Endothelial cell of umbilical vein (primary cell): ENCODE measurements at regions of chr4 and their contacts with region 1.

Region 1: DNA sequence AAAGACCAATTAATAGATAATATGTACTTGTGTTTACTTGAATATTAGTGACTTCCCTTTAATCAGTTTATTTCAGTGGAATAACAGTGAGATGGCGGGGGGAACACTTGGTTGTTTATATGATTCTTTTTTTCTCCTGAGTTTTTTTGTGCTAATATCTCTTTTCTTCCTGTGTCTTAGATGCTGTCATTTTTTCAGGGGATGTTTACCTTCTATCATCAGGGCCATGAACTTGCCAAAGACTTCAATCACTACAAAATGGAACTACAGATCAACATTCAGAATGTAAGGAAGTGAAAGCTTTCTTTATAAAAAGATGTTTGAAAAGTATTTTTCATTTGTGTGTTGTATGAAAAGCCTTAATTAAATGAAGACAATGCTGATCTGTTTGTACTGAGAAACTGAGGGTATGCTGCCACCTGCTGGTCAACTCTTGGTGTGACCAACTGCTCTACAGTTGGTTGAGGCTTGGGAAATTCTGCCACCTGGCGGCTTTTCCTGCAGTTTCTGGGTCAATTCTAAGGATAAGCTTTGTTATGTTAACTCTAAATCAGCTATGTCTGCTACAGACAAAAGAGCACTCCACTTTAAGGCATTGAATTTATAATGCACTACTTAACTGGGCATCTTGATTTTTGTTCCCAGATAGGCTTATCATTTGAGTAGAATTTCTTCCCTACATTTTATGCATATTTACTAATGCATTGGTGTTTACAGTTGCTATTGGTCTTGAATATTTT is 134.8 kb downstream of the ARHGAP10 start:
- DNase-seq: peak; percentile 92
- H3K4me3 ChIP-seq: no peak overlapping the region
- H3K27ac ChIP-seq: no peak overlapping the region
- H3K4me1 ChIP-seq: peaks cover 9% of the 10 kb centered on the region
- H3K27me3 ChIP-seq: no peaks in the 10 kb centered on the region
- CTCF ChIP-seq: peak; percentile 92 to 99
- POLR2A ChIP-seq: no peak

Region 2: DNA sequence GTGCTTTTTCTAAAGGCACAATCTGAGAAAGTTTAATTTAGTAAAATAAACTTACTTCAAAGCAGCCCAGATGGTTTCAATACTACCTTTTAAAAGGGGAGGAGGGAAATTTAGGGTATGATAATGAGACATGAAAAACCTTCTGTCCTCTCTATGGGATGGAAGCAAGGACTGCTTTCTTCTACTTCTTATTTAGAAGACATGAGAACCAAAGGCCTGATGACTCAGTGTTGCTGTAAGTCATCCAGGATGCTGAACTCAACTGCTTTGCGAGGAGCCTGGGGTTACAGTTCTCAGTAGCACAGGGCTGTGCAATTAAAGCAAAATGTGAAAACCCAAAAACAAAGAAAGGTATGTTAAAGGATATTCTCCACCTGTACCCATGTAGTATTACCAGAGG is 526.6 kb before region 1 on chr4:
- CTCF ChIA-PET with region 1: no interaction called
- POLR2A ChIA-PET with region 1: no interaction called
- dilution Hi-C with region 1: no loop called
- intact Hi-C with region 1: no loop called
- DNase-seq: peak; percentile 61
- H3K4me3 ChIP-seq: no peak overlapping the region
- H3K27ac ChIP-seq: peak overlapping the region; percentile 37
- H3K4me1 ChIP-seq: peaks cover 26% of the 10 kb centered on the region
- H3K27me3 ChIP-seq: no peaks in the 10 kb centered on the region
- CTCF ChIP-seq: no peak
- POLR2A ChIP-seq: no peak

Region 3: GRCh38 chr4:147590249-147590920 is 276.3 kb before region 1 on chr4:
- CTCF ChIA-PET with region 1: interaction called, 146 read pairs
- POLR2A ChIA-PET with region 1: no interaction called
- dilution Hi-C with region 1: no loop called
- intact Hi-C with region 1: loop called (anchors 1 kb)
- DNase-seq: peak; percentile 70
- H3K4me3 ChIP-seq: no peak overlapping the region
- H3K27ac ChIP-seq: no peak overlapping the region
- H3K4me1 ChIP-seq: no peaks in the 10 kb centered on the region
- H3K27me3 ChIP-seq: peaks cover 0 to 3% of the 10 kb centered on the region in 2 experiments
- CTCF ChIP-seq: peak; percentile 52 to 53
- POLR2A ChIP-seq: no peak

Region 4: DNA sequence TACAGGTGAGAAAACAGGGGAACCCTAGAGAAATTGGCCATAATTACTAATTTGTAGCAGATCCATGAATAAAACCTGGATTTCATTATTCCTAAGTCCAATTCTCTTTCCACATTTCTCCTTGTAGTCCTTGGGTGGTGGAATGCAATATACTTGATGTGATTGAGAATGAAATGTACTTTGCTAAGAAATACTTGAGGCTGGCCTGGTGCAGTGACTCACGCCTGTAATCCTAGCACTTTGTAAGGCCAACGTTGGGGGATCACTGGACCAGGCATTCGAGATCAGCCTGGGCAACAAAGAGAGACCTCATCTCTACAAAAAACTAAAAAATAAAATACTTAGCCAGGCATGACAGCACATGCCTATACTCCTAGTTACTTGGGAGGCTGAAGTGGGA is 233.6 kb before region 1 on chr4:
- CTCF ChIA-PET with region 1: interaction called, 65 read pairs
- POLR2A ChIA-PET with region 1: no interaction called
- dilution Hi-C with region 1: no loop called
- intact Hi-C with region 1: loop called (anchors 5 kb)
- DNase-seq: no peak
- H3K4me3 ChIP-seq: no peak overlapping the region
- H3K27ac ChIP-seq: no peak overlapping the region
- H3K4me1 ChIP-seq: no peaks in the 10 kb centered on the region
- H3K27me3 ChIP-seq: no peaks in the 10 kb centered on the region
- CTCF ChIP-seq: no peak
- POLR2A ChIP-seq: no peak

Region 5: DNA sequence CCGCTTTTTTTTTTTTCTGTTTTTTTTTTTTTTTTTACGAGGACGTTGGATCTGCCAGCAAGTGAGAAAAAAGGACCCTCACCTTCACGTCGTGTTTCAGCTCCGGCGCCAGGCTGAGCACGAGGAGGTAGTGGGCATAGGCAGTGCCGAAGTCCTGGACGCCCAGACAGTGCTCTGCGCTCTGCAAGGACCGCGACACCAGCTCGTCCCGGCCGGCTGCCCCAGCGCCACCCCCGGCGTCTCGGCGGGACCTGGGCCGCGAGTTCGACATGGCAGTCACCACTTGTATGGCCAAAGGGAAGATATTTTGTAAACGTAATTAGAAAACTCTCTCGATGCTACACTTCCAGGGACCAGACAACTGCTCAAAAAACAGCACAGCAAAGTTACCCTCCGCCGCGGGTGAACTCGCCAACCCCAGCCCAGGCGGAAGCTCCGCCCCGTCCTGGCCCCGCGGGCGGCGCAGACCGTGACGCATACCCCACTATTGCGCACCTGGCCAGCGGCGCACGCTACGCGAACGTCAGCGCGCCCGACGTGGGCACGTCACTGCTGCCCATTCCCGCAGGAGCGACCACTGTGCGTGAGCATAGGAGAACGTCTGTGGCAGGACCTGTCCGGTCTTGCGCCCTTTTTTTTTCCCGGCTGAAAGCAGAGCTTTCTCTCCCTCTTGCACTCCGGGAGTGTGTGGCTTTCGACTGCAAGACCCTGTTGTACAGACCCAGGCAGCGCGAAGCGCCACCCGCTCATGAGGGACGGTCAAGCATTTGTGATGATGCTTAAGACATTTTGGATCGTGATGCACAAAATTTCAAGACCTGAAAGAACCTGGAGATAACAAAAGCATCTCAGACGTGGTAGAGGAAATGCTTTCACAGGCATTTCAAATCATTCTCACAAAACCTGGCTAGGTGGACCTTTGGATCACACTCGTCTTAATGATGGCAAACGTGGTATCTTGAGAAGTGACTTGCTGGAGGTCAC is 182.7 kb before region 1 on chr4 and contains the start of gene PRMT9:
- CTCF ChIA-PET with region 1: interaction called, 57 read pairs
- POLR2A ChIA-PET with region 1: interaction called, 6 read pairs
- dilution Hi-C with region 1: no loop called
- intact Hi-C with region 1: loop called (anchors 1 kb)
- DNase-seq: peak; percentile 93
- H3K4me3 ChIP-seq: peak within 1 kb of the TSS; percentile 47 to 85 (median 80)
- H3K27ac ChIP-seq: peak within 1 kb of the TSS; percentile 78
- H3K4me1 ChIP-seq: peaks cover 15% of the 10 kb centered on the region
- H3K27me3 ChIP-seq: no peaks in the 10 kb centered on the region
- CTCF ChIP-seq: no peak
- POLR2A ChIP-seq: peak; percentile 99
- total RNA-seq, gene PRMT9: 8.2 and 9.0 TPM in 2 replicates

Region 6: GRCh38 chr4:147755561-147756295 is 111.0 kb before region 1 on chr4:
- CTCF ChIA-PET with region 1: interaction called, 24 read pairs
- POLR2A ChIA-PET with region 1: no interaction called
- dilution Hi-C with region 1: no loop called
- intact Hi-C with region 1: no loop called
- DNase-seq: no peak
- H3K4me3 ChIP-seq: no peak overlapping the region
- H3K27ac ChIP-seq: no peak overlapping the region
- H3K4me1 ChIP-seq: peaks cover 11% of the 10 kb centered on the region
- H3K27me3 ChIP-seq: no peaks in the 10 kb centered on the region
- CTCF ChIP-seq: no peak
- POLR2A ChIP-seq: no peak

Region 7: DNA sequence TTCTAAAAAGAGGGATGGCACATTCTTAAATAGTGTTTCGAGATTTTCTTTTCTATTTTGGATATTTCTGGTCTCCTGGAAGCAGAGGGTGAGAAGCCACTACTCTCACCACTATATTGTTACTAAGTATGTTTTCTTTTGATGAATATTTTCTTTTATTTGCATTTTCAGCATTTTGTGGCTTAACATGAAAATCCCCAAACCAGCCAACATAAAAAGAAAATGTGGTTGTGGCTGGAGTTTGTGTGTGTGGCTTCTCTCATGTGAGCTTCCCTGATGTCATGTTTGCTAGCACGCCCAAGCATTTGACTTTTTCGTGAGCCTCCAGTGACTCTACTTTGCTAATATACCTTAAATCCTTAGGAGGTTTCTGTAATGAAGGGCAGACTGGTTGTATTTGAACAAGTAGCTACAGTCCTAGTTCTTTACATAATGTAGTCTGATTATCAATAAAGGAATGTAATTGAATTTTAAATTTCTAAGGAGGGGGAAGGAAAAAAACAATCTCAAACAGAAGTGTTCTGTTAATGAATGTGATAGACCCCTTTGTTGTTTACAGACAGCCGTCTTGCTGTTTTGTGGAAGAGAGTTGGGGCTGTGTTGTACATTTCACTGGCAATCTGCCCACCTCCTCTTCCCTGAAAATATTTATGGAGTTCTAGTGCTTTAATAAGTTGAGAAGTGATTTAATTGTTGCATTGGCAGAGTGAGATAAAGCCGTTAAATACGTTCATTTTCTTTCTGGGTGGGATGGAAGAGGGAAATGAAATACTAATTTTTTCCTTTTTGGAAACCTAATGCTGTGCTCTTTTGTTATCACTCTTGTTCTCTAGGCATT is 20.2 kb before region 1 on chr4:
- CTCF ChIA-PET with region 1: interaction called, 37 read pairs
- POLR2A ChIA-PET with region 1: no interaction called
- dilution Hi-C with region 1: no loop called
- intact Hi-C with region 1: no loop called
- DNase-seq: peak; percentile 69
- H3K4me3 ChIP-seq: no peak overlapping the region
- H3K27ac ChIP-seq: no peak overlapping the region
- H3K4me1 ChIP-seq: peaks cover 7% of the 10 kb centered on the region
- H3K27me3 ChIP-seq: no peaks in the 10 kb centered on the region
- CTCF ChIP-seq: no peak
- POLR2A ChIP-seq: no peak